Left colon (tissue), 2 donors: ENCODE measurements at regions of chr5 and their contacts with region 1.

Region 1: GRCh38 chr5:95961617-95962474 is at the start of gene ELL2:
- DNase-seq: peak; percentile 99
- ATAC-seq: peak; percentile 83
- total RNA-seq, gene ELL2: 28.7 to 36.7 TPM

Region 2: DNA sequence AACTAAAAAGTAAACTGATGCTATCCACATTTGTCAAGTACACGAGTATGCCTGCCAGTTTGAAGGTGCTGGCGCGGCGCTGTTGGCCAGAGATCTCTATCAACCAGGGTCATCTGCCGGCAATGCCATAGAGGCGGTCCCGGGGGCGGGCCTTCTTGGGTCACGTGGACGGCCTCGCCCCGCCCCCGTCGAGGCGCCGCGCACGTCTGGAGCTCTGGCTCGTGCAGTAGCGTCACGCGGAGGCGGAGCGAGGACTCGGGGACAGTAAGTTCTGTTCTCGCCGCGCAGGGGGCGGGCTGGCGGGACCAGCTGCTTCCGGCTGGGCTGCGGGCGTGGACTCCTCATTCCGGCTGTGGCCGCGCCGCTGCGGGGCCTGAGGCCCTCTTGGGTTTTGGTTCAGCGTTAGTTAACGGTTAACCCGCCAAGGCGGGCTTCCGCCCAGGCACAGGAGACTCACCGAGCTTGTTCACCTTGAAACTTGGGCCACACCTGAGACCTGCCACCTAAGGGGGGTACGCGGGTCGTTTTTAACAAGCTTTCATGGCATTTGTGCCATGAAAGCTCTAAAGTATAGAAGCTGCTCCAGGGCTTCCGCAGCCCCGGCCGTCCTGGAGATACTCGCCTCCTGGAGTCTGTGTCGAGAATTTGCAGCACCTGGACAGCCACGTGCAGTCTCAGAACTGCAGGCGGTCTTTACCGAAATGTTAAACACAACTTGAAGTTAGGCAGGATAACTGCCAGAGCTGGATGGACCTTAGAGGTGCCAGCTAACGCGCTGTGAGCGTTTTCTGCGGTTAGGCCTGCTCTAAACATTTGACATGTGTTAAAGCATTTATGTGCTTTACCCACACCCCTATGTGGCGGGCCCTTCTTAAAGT is 315.1 kb before region 1 on chr5 and contains the start of gene RFESD:
- intact Hi-C with region 1: loop called in 1 of 2 experiments (anchors 10 kb)
- DNase-seq: peak; percentile 100
- ATAC-seq: peak; percentile 94
- total RNA-seq, gene RFESD: 0.55 to 0.84 TPM

Region 3: GRCh38 chr5:95858661-95859326 is 103.1 kb before region 1 on chr5:
- intact Hi-C with region 1: loop called in 1 of 2 experiments (anchors 5 kb)
- DNase-seq: peak; percentile 82 to 84
- ATAC-seq: peak; percentile 91

Region 4: DNA sequence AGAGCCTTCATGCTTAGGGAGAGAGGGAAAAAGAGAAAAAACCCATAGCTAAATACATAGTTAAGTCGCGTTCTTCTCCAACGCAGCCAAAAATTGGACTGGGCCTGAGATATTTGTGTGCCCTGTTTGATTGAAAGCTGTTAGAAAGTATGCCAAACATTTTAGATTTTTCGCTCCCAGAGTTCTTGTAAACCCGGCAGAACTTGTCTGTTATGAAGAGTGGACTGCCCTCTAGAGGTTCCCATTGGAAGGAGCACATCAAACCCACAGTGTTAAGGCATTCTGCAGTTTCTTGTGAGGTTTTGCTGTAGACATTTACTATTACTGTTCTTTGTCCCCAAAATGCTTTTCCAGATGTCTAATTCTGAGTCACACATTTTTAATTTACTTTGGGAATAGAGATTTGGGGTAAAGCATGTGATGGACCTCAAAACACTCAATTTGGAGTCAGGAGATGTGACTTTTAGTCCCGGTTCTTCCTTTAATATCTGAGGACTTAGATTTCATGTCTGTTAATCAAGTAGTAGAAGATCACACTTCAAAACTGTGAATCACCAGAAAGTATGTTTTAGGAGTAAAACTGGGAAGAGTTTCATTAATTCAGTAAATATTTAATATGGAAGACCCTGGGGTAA is 374.6 kb after region 1 on chr5:
- intact Hi-C with region 1: loop called in 1 of 2 experiments (anchors 5 kb)
- DNase-seq: peak; percentile 64 to 74
- ATAC-seq: peak; percentile 70